Activated B cell treated with CpG ODN at 0.5 μM for 24 hours (primary cell): ENCODE measurements at regions of chr19 and their contacts with region 1.

Region 1: GRCh38 chr19:58386576-58387337 is at the start of gene RPS5:
- DNase-seq: peak; percentile 85
- ATAC-seq: peak; percentile 89
- H3K4me3 Mint-ChIP-seq: peak within 1 kb of the TSS; percentile 95
- H3K27ac Mint-ChIP-seq: peak within 1 kb of the TSS; percentile 98
- H3K4me1 Mint-ChIP-seq: peaks cover 50% of the 10 kb centered on the region
- H3K27me3 Mint-ChIP-seq: no peaks in the 10 kb centered on the region
- CTCF ChIP-seq: no peak
- total RNA-seq, gene RPS5: 1,982 and 2,193 TPM in 2 replicates

Region 2: GRCh38 chr19:58252102-58252685 is 134.6 kb before region 1 on chr19:
- CTCF ChIA-PET with region 1: no interaction called
- POLR2A ChIA-PET with region 1: no interaction called
- intact Hi-C with region 1: no loop called
- DNase-seq: no peak
- ATAC-seq: no peak
- H3K4me3 Mint-ChIP-seq: no peak overlapping the region
- H3K27ac Mint-ChIP-seq: no peak overlapping the region
- H3K4me1 Mint-ChIP-seq: no peaks in the 10 kb centered on the region
- H3K27me3 Mint-ChIP-seq: no peaks in the 10 kb centered on the region
- CTCF ChIP-seq: no peak

Region 3: DNA sequence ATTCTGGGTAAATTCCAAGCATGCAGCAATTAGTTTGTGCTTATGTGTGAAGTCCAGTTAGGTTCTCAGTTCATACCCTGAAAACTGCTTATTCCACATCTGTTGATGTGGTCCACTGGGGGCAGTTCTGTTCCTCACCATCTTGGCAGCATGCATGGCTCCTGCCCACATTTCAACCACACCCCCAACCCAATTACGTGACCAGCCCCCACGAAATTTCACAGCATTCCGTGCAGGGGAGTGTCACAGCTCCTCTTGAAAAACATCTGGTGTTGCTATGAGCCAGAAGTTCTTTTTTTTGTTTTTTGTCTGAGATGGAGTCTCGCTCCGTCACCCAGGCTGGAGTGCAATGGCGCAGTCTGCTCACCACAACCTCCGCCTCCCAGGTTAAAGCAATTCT is 90.7 kb before region 1 on chr19:
- CTCF ChIA-PET with region 1: no interaction called
- POLR2A ChIA-PET with region 1: no interaction called
- intact Hi-C with region 1: no loop called
- DNase-seq: no peak
- ATAC-seq: no peak
- H3K4me3 Mint-ChIP-seq: no peak overlapping the region
- H3K27ac Mint-ChIP-seq: no peak overlapping the region
- H3K4me1 Mint-ChIP-seq: no peaks in the 10 kb centered on the region
- H3K27me3 Mint-ChIP-seq: no peaks in the 10 kb centered on the region
- CTCF ChIP-seq: no peak

Region 4: GRCh38 chr19:58346961-58347931 is 39.5 kb before region 1 on chr19:
- CTCF ChIA-PET with region 1: no interaction called
- POLR2A ChIA-PET with region 1: interaction called, 8 read pairs
- intact Hi-C with region 1: loop called (anchors 1 kb)
- DNase-seq: peak; percentile 84
- ATAC-seq: peak; percentile 93
- H3K4me3 Mint-ChIP-seq: peak overlapping the region; percentile 93
- H3K27ac Mint-ChIP-seq: peak overlapping the region; percentile 76
- H3K4me1 Mint-ChIP-seq: peaks cover 30% of the 10 kb centered on the region
- H3K27me3 Mint-ChIP-seq: no peaks in the 10 kb centered on the region
- CTCF ChIP-seq: no peak

Region 5: GRCh38 chr19:58429745-58430144 is 43.0 kb after region 1 on chr19:
- CTCF ChIA-PET with region 1: no interaction called
- POLR2A ChIA-PET with region 1: no interaction called
- intact Hi-C with region 1: no loop called
- DNase-seq: no peak
- ATAC-seq: no peak
- H3K4me3 Mint-ChIP-seq: no peak overlapping the region
- H3K27ac Mint-ChIP-seq: no peak overlapping the region
- H3K4me1 Mint-ChIP-seq: no peaks in the 10 kb centered on the region
- H3K27me3 Mint-ChIP-seq: no peaks in the 10 kb centered on the region
- CTCF ChIP-seq: no peak

Region 6: GRCh38 chr19:58466760-58467589 is 80.2 kb after region 1 on chr19 and contains the start of gene ZNF324:
- CTCF ChIA-PET with region 1: no interaction called
- POLR2A ChIA-PET with region 1: interaction called, 3 read pairs
- intact Hi-C with region 1: loop called (anchors 2 kb)
- DNase-seq: peak; percentile 95
- ATAC-seq: peak; percentile 92
- H3K4me3 Mint-ChIP-seq: peak within 1 kb of the TSS; percentile 81
- H3K27ac Mint-ChIP-seq: peak within 1 kb of the TSS; percentile 56
- H3K4me1 Mint-ChIP-seq: peaks cover 26% of the 10 kb centered on the region
- H3K27me3 Mint-ChIP-seq: no peaks in the 10 kb centered on the region
- CTCF ChIP-seq: no peak
- total RNA-seq, gene ZNF324: 11.8 and 13.1 TPM in 2 replicates

Region 7: DNA sequence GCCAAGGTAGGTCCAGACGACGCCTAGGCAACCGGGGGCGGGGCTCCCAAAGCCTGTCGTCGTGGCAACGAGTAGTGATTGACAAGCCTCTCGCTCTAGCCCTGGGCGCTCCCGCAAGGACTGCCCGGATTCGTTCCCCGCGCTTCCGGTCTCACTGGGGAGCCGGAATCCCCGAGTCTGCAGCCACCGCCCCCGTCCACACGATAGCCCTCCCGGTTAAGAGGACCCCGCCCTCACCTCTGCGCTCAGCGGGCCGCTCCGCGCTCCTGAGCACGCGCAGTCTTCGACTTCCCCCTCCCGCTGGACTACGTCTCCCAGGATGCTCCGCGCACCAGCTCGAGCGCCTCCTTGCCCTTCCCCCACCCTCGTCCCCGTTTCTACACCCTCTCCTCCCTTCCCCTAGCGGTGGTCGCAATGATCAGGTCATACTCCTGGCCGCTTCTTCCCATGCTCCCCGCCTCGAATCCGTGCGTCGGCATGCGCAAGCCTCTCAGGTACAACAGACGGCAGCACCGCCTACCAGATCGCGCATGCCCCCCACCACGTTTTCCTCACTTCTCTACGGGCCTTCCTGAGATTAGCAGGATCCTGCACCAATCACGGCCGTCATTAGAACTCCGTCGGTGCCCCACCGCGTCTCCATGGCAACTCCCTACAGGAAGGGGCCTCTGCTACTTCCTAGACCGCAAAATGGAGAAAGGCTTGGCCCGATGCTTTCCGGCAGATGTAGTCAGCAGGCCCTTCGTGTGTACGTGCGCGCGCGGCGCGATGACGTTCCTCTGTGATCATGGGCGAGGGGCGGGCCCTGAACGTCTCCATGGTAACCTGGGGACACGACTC is 186.3 kb after region 1 on chr19 and contains the start of gene MZF1:
- CTCF ChIA-PET with region 1: no interaction called
- POLR2A ChIA-PET with region 1: no interaction called
- intact Hi-C with region 1: loop called (anchors 1 kb)
- DNase-seq: peak; percentile 100
- ATAC-seq: peak; percentile 61
- H3K4me3 Mint-ChIP-seq: peak within 1 kb of the TSS; percentile 97
- H3K27ac Mint-ChIP-seq: peak within 1 kb of the TSS; percentile 100
- H3K4me1 Mint-ChIP-seq: peaks cover 44% of the 10 kb centered on the region
- H3K27me3 Mint-ChIP-seq: no peaks in the 10 kb centered on the region
- CTCF ChIP-seq: no peak
- total RNA-seq, gene MZF1: 41.9 and 54.5 TPM in 2 replicates